ENCODE measurements at regions of chr11 and their contacts with region 1.

Region 1: GRCh38 chr11:128695539-128696221 is 1.8 kb downstream of the FLI1 start:
- DNase-seq: peak in 2 of 5 donors; percentile 60
- ATAC-seq: peak; percentile 7 to 66 (median 34)
- H3K4me3 ChIP-seq: peak overlapping the region; percentile 67 to 97 (median 85)
- H3K27ac ChIP-seq: peak overlapping the region; percentile 89 to 98 (median 96)
- H3K4me1 ChIP-seq: peaks cover 0 to 70% (median 34%) of the 10 kb centered on the region in 12 donors
- H3K27me3 ChIP-seq: peaks cover 0 to 50% (median 0%) of the 10 kb centered on the region in 9 donors
- CTCF ChIP-seq: no peak
- POLR2A ChIP-seq: no peak

Region 2: DNA sequence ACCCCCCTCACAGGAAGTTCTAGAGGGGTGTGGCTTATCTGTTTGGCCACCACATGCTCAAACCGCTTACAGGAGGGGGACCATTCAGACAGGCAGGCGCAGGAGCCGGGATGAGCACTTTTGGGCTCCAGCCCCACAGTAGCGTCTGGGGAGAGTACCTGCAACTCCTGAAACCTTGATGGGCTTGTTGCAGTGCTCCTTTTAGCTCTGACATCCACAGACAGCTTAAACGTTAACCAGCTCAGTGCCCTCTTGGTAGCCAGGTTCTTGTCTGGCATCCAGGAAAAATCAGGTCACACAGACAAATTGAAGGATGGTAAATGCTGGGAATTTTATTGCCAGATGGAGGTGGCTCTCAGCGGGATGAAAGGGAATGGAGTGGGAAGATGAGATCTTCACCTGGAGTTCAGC is 434.7 kb before region 1 on chr11:
- intact Hi-C with region 1: no loop called
- DNase-seq: no peak
- ATAC-seq: no peak
- H3K4me3 ChIP-seq: no peak overlapping the region
- H3K27ac ChIP-seq: no peak overlapping the region
- H3K4me1 ChIP-seq: no peaks in the 10 kb centered on the region
- H3K27me3 ChIP-seq: no peaks in the 10 kb centered on the region
- CTCF ChIP-seq: no peak
- POLR2A ChIP-seq: no peak

Region 3: DNA sequence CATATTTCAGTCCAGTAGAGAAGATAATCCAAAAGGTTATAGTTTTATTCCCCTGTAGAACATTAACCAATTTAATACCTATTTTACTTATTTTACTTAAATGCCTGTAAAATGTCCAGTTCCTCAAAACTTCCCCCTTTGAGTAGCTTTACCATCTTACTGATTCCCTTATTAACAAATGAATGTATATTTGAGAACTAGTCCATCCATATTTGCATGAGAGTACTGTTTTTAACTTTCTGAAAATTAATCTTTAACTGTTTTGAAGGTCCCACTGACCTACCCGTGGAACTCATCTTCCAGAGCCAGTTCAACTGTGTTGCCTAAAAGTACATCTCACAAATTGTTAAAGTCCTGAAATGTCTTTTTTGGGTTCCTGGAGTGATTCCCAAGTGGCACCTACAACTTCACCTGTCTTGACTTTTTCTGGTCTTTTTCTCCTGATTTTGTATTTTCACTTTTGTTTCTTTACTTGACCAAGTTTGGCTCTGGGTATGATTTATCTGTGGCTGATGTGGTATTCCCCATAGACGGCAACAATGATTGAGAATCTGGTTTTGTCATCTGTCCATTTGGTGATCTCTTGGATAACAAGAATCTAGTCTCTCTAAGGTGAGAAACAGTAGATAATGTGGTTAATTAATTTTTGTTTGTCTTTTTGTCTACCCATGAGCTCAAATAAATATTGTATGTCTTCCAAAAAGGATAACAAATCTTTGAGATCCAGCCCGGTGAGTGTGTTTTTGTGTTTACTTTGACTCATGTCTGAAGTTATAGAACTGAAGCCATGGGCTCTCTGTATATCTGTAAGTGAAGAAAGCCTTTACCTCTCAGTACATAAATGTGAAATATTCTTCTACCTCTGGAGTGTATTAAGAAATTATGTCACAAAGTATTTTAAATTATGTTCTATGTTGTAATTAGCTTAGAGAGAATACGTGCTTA is 282.6 kb before region 1 on chr11:
- intact Hi-C with region 1: loop called in 1 of 10 experiments (anchors 5 kb)
- DNase-seq: no peak
- ATAC-seq: no peak
- H3K4me3 ChIP-seq: no peak overlapping the region
- H3K27ac ChIP-seq: peak overlapping the region in 2 of 12 donors; percentile 4 to 33
- H3K4me1 ChIP-seq: peaks cover 0 to 44% (median 10%) of the 10 kb centered on the region in 12 donors
- H3K27me3 ChIP-seq: no peaks in the 10 kb centered on the region
- CTCF ChIP-seq: no peak
- POLR2A ChIP-seq: no peak

Region 4: GRCh38 chr11:128725630-128726319 is 30.1 kb after region 1 on chr11:
- intact Hi-C with region 1: loop called in 2 of 10 experiments (anchors 5 kb)
- DNase-seq: no peak
- ATAC-seq: peak in 3 of 4 donors; percentile 41 to 54 (median 45)
- H3K4me3 ChIP-seq: peak overlapping the region in 1 of 12 donors; percentile 38
- H3K27ac ChIP-seq: peak overlapping the region in 7 of 12 donors; percentile 17 to 90 (median 34)
- H3K4me1 ChIP-seq: peaks cover 10 to 99% (median 79%) of the 10 kb centered on the region in 12 donors
- H3K27me3 ChIP-seq: no peaks in the 10 kb centered on the region
- CTCF ChIP-seq: no peak
- POLR2A ChIP-seq: no peak

Region 5: GRCh38 chr11:128757235-128757711 is 61.6 kb after region 1 on chr11:
- intact Hi-C with region 1: loop called in 4 of 10 experiments (anchors 5 to 10 kb)
- DNase-seq: peak in 4 of 5 donors; percentile 41 to 52 (median 44)
- ATAC-seq: peak in 3 of 4 donors; percentile 74 to 78 (median 77)
- H3K4me3 ChIP-seq: no peak overlapping the region
- H3K27ac ChIP-seq: peak overlapping the region in 2 of 12 donors; percentile 4 to 6
- H3K4me1 ChIP-seq: peaks cover 0 to 44% (median 14%) of the 10 kb centered on the region in 12 donors
- H3K27me3 ChIP-seq: no peaks in the 10 kb centered on the region
- CTCF ChIP-seq: peak in 9 of 12 donors; percentile 20 to 56 (median 41)
- POLR2A ChIP-seq: no peak

Region 6: GRCh38 chr11:128776424-128777284 is 81.0 kb after region 1 on chr11:
- intact Hi-C with region 1: loop called in 2 of 10 experiments (anchors 2 to 5 kb)
- DNase-seq: peak; percentile 61 to 81 (median 67)
- ATAC-seq: peak; percentile 47 to 76 (median 53)
- H3K4me3 ChIP-seq: peak overlapping the region in 2 of 12 donors; percentile 19 to 25
- H3K27ac ChIP-seq: peak overlapping the region in 5 of 12 donors; percentile 25 to 60 (median 42)
- H3K4me1 ChIP-seq: peaks cover 0 to 52% (median 31%) of the 10 kb centered on the region in 12 donors
- H3K27me3 ChIP-seq: no peaks in the 10 kb centered on the region
- CTCF ChIP-seq: peak; percentile 23 to 72 (median 44)
- POLR2A ChIP-seq: no peak